ENCODE measurements at regions of chr1 and their contacts with region 1.

Region 1: GRCh38 chr1:116498789-116499628 is 71.8 kb downstream of the CD58 start:
- DNase-seq: peak; percentile 68
- ATAC-seq: peak; percentile 64

Region 2: GRCh38 chr1:116139592-116140134 is 359.3 kb before region 1 on chr1:
- intact Hi-C with region 1: loop called (anchors 2 kb)
- DNase-seq: no peak
- ATAC-seq: peak; percentile 12

Region 3: DNA sequence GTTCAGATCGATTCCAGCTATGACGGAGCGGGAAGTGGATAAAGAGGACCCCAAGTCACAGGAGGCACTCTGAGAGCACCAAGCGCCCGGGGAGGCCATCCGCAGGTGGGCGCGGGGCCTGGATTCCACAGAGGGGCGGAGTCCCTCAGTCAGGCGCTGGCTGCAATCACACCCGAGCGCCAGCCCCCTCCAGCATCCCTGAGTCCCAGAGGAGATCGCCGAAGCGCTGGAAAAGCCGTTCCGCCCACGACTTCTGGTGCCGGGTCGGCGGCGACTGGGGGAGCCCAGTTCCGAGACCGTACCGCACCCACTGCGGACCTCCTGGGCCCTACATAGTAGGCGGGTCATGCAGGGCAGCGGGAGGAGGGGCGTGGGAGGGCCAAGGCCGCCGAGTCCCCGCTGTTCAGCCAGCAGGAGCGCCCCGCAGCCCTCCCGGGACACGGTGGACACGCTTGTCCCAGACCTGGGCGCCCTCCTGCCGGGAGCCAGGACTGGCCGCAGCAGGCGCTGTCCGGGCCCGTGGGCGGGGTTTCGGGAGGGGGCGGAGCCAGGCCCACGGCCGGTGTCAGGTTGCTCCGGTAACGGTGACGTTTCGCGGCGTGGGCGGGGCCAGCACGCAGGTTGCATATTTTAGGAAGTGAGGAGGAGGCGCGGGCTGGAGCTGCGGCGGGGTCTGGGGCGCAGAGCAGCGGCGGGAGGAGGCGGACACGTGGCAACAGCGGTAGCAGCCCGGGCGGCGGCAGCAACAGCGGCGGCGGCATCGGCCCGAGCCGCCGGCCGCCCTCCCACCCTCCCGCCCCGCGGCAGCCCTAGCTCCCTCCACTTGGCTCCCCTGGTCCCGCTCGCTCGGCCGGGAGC is 126.2 kb before region 1 on chr1 and contains the start of gene ATP1A1:
- intact Hi-C with region 1: loop called (anchors 5 kb)
- DNase-seq: peak; percentile 99
- ATAC-seq: peak; percentile 86
- total RNA-seq, gene ATP1A1: 255 TPM

Region 4: GRCh38 chr1:116556289-116557006 is 57.4 kb after region 1 on chr1:
- intact Hi-C with region 1: no loop called
- DNase-seq: peak; percentile 66
- ATAC-seq: peak; percentile 72

Region 5: DNA sequence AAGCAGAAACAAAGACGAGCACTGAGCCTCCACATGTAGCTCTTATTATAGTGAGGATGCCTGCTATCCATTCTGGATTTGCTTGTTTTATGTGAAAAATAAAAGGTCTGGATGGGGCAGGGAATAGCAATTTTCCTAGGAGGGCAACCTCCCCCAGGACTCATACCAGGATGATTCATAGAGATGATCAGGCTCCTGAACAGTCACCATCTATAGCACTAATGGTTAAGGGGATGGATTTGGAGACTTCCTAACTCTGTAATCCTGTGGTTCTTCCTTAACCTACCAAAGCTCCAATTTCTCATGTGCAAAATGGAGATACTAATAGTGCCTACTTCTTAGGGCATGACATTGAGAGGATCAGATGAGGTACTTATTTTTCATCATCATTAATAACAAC is 106.3 kb after region 1 on chr1:
- intact Hi-C with region 1: no loop called
- DNase-seq: no peak
- ATAC-seq: no peak

Measured in Right ventricle myocardium superior (tissue), 1 donor.